ENCODE measurements at regions of chr4 and their contacts with region 1.

Region 1: GRCh38 chr4:185640811-185641675 is 105.7 kb upstream of the PDLIM3 start:
- DNase-seq: no peak

Region 2: GRCh38 chr4:186037692-186038658 is 396.9 kb after region 1 on chr4:
- intact Hi-C with region 1: loop called (anchors 2 kb)
- DNase-seq: peak in 3 of 10 donors; percentile 17 to 26 (median 24)

Measured in posterior cingulate gyrus (tissue), 11 donors.